Endothelial cell of umbilical vein (primary cell): ENCODE measurements at regions of chr3 and their contacts with region 1.

Region 1: GRCh38 chr3:25427942-25428788 is at the start of gene RARB:
- DNase-seq: peak; percentile 98
- H3K4me3 ChIP-seq: peak within 1 kb of the TSS; percentile 75 to 100 (median 96)
- H3K27ac ChIP-seq: peak within 1 kb of the TSS; percentile 96
- H3K4me1 ChIP-seq: peaks cover 27% of the 10 kb centered on the region
- H3K27me3 ChIP-seq: no peaks in the 10 kb centered on the region
- CTCF ChIP-seq: no peak
- POLR2A ChIP-seq: peak; percentile 96
- total RNA-seq, gene RARB: 19.3 and 23.4 TPM in 2 replicates

Region 2: DNA sequence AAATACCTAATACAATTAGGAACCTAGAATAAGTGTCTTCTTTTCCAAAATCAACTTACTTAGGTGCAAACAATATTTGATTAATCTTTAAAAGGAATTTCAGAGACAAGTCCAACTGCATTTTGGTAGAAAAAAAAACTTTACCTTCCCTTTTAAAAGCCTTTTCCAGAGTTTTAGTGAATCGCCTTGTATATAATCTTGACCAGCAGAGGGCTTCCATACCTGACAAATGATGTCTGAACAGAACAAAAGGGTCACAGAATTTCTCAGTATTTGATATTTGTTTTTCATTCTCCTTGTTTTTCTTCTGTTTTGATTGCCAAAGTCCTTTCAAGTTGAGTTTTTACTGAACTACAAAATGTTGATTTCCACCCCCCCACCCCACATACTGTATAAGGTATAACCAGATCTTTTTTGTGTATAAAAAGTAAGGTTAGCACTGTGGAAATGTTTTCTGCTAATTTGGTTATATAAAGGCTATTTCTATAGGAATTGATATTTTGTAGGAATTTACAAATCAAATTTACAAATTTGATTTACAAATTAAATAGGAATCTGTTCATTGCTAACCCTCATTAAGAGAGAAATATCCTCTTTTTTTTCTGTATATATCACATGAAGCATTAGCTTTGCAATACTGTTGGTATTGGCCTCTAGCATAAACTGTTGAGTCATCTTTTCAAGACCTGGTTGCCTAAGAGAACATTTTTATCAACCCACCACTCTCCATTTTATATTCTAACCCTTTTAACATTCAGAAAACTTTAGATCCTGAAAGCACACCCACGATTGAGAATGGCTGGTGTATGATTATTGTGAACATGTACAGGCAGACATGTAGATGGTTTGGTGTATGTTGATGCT is 464.2 kb before region 1 on chr3:
- CTCF ChIA-PET with region 1: interaction called, 7 read pairs
- POLR2A ChIA-PET with region 1: no interaction called
- dilution Hi-C with region 1: no loop called
- intact Hi-C with region 1: loop called (anchors 1 kb)
- DNase-seq: peak; percentile 40
- H3K4me3 ChIP-seq: no peak overlapping the region
- H3K27ac ChIP-seq: no peak overlapping the region
- H3K4me1 ChIP-seq: no peaks in the 10 kb centered on the region
- H3K27me3 ChIP-seq: no peaks in the 10 kb centered on the region
- CTCF ChIP-seq: peak; percentile 19 to 38
- POLR2A ChIP-seq: no peak

Region 3: GRCh38 chr3:25151281-25151902 is 276.8 kb before region 1 on chr3:
- CTCF ChIA-PET with region 1: no interaction called
- POLR2A ChIA-PET with region 1: no interaction called
- dilution Hi-C with region 1: no loop called
- intact Hi-C with region 1: loop called (anchors 1 kb)
- DNase-seq: peak; percentile 88
- H3K4me3 ChIP-seq: peak overlapping the region in 2 of 3 experiments; percentile 1 to 49
- H3K27ac ChIP-seq: peak overlapping the region; percentile 81
- H3K4me1 ChIP-seq: peaks cover 25% of the 10 kb centered on the region
- H3K27me3 ChIP-seq: no peaks in the 10 kb centered on the region
- CTCF ChIP-seq: no peak
- POLR2A ChIP-seq: peak; percentile 21

Region 4: DNA sequence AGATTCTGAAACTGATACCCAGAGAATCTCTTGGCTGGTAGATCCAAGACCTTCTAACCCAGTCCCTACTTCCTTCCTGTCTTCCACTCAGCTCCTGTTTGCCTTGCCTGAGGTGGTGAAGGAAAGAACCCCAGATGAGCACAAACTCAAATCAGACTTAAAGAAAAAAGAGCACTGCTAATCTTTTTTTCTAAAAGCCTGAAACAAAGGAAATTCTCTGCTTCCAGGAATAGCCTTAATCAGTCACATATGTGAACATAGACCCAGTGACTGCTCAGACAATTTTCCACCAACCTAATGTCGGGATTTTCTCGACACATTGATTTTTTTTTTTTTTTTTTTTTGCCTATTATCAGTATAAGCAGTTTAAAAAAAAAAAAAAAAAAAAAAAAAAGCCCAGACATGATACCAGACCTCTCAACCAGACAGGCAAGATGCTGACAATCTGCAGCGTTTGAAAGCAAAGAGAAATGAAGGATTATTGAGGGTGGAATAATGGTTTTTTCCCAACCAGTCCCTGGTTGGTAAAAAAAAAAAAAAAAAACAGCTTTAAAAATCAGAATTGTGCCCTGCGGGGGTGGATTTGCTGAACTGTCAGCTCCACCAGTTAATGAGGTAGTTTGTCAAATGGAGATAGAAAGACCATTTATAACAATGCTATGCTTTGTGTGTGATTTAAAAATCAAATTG is 256.9 kb before region 1 on chr3:
- CTCF ChIA-PET with region 1: no interaction called
- POLR2A ChIA-PET with region 1: no interaction called
- dilution Hi-C with region 1: no loop called
- intact Hi-C with region 1: no loop called
- DNase-seq: no peak
- H3K4me3 ChIP-seq: no peak overlapping the region
- H3K27ac ChIP-seq: no peak overlapping the region
- H3K4me1 ChIP-seq: no peaks in the 10 kb centered on the region
- H3K27me3 ChIP-seq: no peaks in the 10 kb centered on the region
- CTCF ChIP-seq: no peak
- POLR2A ChIP-seq: no peak

Region 5: GRCh38 chr3:25493786-25494185 is 65.6 kb after region 1 on chr3:
- CTCF ChIA-PET with region 1: interaction called, 6 read pairs
- POLR2A ChIA-PET with region 1: interaction called, 6 read pairs
- dilution Hi-C with region 1: no loop called
- intact Hi-C with region 1: loop called (anchors 1 kb)
- DNase-seq: peak; percentile 75
- H3K4me3 ChIP-seq: no peak overlapping the region
- H3K27ac ChIP-seq: peak overlapping the region; percentile 83
- H3K4me1 ChIP-seq: peaks cover 24% of the 10 kb centered on the region
- H3K27me3 ChIP-seq: no peaks in the 10 kb centered on the region
- CTCF ChIP-seq: no peak
- POLR2A ChIP-seq: no peak

Region 6: DNA sequence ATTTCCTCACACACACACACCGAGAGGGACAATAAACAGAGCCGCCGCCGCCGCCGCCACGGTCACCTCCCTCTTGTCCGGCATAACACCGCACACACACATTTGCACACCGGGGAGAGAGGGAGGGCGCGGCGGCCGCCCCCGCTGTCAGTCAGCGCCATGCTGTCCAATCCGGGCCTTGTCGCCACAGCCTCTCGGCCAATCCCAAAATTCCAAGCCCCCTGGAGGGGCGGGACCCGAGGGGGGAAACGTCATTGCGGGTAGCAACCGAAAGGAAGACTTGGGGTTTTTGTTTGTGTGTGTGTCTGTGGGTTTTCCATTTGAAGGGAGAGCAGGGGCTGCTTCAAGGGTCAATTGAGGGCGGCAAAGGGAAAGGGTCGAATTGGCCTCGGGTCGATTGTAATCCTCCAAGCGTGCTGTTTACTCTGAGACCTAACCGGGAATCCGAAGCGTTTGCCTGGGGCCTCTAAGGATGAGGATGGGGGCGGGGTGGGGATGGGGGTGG is 236.7 kb after region 1 on chr3 and contains the start of gene TOP2B:
- CTCF ChIA-PET with region 1: no interaction called
- POLR2A ChIA-PET with region 1: no interaction called
- dilution Hi-C with region 1: no loop called
- intact Hi-C with region 1: loop called (anchors 2 kb)
- DNase-seq: peak; percentile 98
- H3K4me3 ChIP-seq: peak within 1 kb of the TSS; percentile 83 to 98 (median 92)
- H3K27ac ChIP-seq: peak within 1 kb of the TSS; percentile 76
- H3K4me1 ChIP-seq: peaks cover 19% of the 10 kb centered on the region
- H3K27me3 ChIP-seq: no peaks in the 10 kb centered on the region
- CTCF ChIP-seq: no peak
- POLR2A ChIP-seq: peak; percentile 24
- total RNA-seq, gene TOP2B: 98.9 and 102 TPM in 2 replicates